CD4-positive, alpha-beta memory T cell (primary cell): ENCODE measurements at regions of chr2 and their contacts with region 1.

Region 1: DNA sequence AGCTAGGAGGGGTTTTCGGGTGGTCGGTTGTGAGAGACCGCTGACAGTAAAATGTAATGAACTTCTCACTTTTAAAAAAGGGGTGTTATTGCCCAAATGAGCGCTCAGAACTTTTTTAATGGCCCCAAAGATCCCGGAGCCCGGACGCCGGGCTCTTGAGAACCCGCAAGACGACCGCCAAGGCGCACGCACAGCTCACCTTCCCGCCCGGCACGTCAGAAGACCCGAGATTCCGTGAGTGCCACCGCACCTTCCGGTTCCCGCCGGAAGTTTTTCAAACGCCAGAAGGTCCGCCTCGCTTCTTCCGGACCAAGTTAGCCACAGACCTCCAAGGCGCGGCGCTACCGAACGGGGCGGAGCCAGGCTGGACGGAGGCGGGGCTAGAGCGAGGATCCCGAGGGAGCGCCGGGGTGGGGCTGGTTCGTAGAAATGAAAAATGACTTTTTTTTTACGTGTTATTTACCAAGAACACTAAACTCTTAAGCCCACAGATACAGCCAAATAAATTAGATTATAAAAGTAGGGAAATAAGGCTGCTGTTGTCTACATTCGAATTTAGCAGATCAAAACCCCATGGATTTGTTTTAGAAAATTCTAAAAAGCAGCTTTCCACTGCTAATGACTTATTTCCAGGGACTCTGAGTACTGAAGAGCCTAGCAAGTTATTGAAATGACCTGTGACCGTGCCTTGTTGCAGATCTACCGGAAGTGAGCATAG is at the start of gene SRBD1:
- DNase-seq: peak; percentile 75 to 86 (median 80)
- H3K4me3 ChIP-seq: peak within 1 kb of the TSS; percentile 57 to 90
- H3K4me3 Mint-ChIP-seq: peak within 1 kb of the TSS; percentile 94 to 99 (median 98)
- H3K27ac ChIP-seq: peak within 1 kb of the TSS; percentile 63
- H3K27ac Mint-ChIP-seq: peak within 1 kb of the TSS; percentile 93 to 98 (median 96)
- H3K4me1 ChIP-seq: peaks cover 7% of the 10 kb centered on the region
- H3K4me1 Mint-ChIP-seq: peaks cover 17 to 28% (median 21%) of the 10 kb centered on the region in 4 donors
- H3K27me3 ChIP-seq: no peaks in the 10 kb centered on the region
- H3K27me3 Mint-ChIP-seq: no peaks in the 10 kb centered on the region
- total RNA-seq, gene SRBD1: 22.4 to 23.7 TPM

Region 2: GRCh38 chr2:45567974-45568789 is 43.0 kb before region 1 on chr2:
- CTCF ChIA-PET with region 1: interaction called, 6 read pairs
- POLR2A ChIA-PET with region 1: interaction called, 10 read pairs
- intact Hi-C with region 1: loop called (anchors 2 kb)
- DNase-seq: peak in 4 of 5 donors; percentile 73 to 84 (median 78)
- H3K4me3 ChIP-seq: peak overlapping the region; percentile 12 to 56
- H3K4me3 Mint-ChIP-seq: peak overlapping the region; percentile 83 to 94 (median 87)
- H3K27ac ChIP-seq: peak overlapping the region; percentile 72
- H3K27ac Mint-ChIP-seq: peak overlapping the region; percentile 79 to 98 (median 97)
- H3K4me1 ChIP-seq: peaks cover 18% of the 10 kb centered on the region
- H3K4me1 Mint-ChIP-seq: peaks cover 15 to 21% (median 18%) of the 10 kb centered on the region in 4 donors
- H3K27me3 ChIP-seq: no peaks in the 10 kb centered on the region
- H3K27me3 Mint-ChIP-seq: no peaks in the 10 kb centered on the region

Region 3: DNA sequence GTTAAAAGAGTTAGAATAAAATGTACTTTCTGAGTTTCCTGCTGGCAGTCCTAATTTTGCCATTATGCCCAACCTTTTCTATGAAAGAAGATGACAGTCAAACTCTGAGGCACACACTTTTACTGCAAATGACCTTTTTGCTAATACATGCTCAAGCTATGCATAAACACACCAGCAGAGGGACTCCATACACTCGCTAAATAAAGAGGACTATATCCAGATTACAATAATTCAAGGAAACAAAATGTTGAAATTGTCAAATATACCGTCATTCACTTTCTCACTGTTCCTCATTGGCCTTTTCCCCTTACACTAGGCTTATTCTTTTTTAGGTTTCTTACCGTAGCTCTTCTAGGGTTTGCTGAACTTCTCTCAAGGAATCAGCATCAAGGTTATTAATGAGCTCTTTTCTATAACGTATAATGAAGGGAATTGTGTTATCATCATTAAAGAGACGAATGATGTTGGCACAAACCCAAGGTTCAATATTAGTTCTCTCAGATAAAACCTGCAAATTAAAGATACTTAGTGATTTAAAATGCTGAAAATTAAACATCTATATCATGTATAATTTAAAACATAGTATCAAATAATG is 25.8 kb before region 1 on chr2:
- CTCF ChIA-PET with region 1: interaction called, 10 read pairs
- POLR2A ChIA-PET with region 1: no interaction called
- intact Hi-C with region 1: no loop called
- DNase-seq: peak in 3 of 5 donors; percentile 6 to 13 (median 9)
- H3K4me3 ChIP-seq: no peak overlapping the region
- H3K4me3 Mint-ChIP-seq: no peak overlapping the region
- H3K27ac ChIP-seq: no peak overlapping the region
- H3K27ac Mint-ChIP-seq: peak overlapping the region in 1 of 7 donors; percentile 10
- H3K4me1 ChIP-seq: peaks cover 14% of the 10 kb centered on the region
- H3K4me1 Mint-ChIP-seq: peaks cover 16 to 22% (median 20%) of the 10 kb centered on the region in 4 donors
- H3K27me3 ChIP-seq: no peaks in the 10 kb centered on the region
- H3K27me3 Mint-ChIP-seq: no peaks in the 10 kb centered on the region

Region 4: GRCh38 chr2:46737577-46737976 is 1126.4 kb after region 1 on chr2:
- CTCF ChIA-PET with region 1: no interaction called
- POLR2A ChIA-PET with region 1: no interaction called
- intact Hi-C with region 1: no loop called
- DNase-seq: no peak
- H3K4me3 ChIP-seq: no peak overlapping the region
- H3K4me3 Mint-ChIP-seq: no peak overlapping the region
- H3K27ac ChIP-seq: no peak overlapping the region
- H3K27ac Mint-ChIP-seq: no peak overlapping the region
- H3K4me1 ChIP-seq: peaks cover 4% of the 10 kb centered on the region
- H3K4me1 Mint-ChIP-seq: peaks cover 22 to 31% (median 30%) of the 10 kb centered on the region in 4 donors
- H3K27me3 ChIP-seq: no peaks in the 10 kb centered on the region
- H3K27me3 Mint-ChIP-seq: no peaks in the 10 kb centered on the region